Sciatic nerve (tissue), 2 donors: ENCODE measurements at regions of chr17 and their contacts with region 1.

Region 1: GRCh38 chr17:50151041-50151936 is 812 bp upstream of the PPP1R9B start:
- DNase-seq: peak; percentile 94
- ATAC-seq: peak; percentile 85

Region 2: GRCh38 chr17:50051082-50051576 is 100.2 kb before region 1 on chr17:
- intact Hi-C with region 1: no loop called
- DNase-seq: no peak
- ATAC-seq: no peak

Region 3: DNA sequence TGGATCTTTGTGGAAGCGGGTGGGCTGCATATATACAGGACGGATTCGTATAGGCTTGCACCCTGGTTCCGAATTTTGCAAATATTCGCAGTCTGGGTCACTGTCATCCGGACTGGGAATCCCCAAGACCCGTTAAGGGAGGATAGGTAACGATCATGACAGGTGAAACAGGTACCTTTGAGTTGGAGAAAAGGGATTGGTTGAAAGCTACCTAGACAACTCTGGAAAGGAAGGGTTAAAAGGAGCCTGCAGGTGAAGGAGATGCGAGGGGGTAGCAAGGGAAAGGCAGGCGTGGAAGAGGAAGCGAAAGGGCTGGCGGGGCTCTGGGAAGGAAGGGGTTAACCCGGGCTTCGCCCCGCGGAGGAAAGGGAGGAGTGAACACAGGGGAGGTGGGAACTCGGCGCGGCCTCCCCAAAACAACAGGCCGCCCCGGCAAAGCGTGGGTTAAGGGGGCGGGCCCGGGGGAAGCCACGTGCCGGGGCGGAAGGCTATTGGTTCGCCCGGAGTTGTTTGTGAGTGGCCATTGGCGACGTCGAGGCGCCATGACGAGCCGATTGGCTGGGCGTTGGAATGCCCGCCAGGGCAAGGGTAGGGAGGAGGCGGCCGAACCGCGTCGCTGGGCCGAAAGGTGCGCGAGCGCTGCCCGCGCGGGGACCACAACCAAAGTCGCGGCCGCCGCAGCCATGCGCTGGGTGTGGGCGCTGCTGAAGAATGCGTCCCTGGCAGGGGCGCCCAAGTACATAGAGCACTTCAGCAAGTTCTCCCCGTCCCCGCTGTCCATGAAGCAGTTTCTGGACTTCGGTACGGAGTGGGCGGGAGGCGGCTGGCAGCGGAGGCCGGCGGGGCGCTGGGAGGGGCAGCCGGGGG is 56.3 kb before region 1 on chr17 and contains the start of gene PDK2:
- intact Hi-C with region 1: loop called (anchors 10 kb)
- DNase-seq: peak; percentile 97
- ATAC-seq: peak; percentile 98
- total RNA-seq, gene PDK2: 48.6 TPM